ENCODE measurements at regions of chr22 and their contacts with region 1.

Region 1: GRCh38 chr22:17164392-17165024 is 5.4 kb upstream of the HDHD5 start:
- DNase-seq: no peak
- H3K4me3 ChIP-seq: no peak overlapping the region
- H3K27ac ChIP-seq: no peak overlapping the region
- H3K4me1 ChIP-seq: peaks cover 26% of the 10 kb centered on the region
- H3K27me3 ChIP-seq: no peaks in the 10 kb centered on the region
- CTCF ChIP-seq: no peak

Region 2: GRCh38 chr22:17084554-17085276 is 79.8 kb before region 1 on chr22 and contains the start of gene IL17RA:
- intact Hi-C with region 1: loop called (anchors 10 kb)
- DNase-seq: peak; percentile 90
- H3K4me3 ChIP-seq: peak within 1 kb of the TSS; percentile 86
- H3K27ac ChIP-seq: peak within 1 kb of the TSS; percentile 87
- H3K4me1 ChIP-seq: peaks cover 35% of the 10 kb centered on the region
- H3K27me3 ChIP-seq: no peaks in the 10 kb centered on the region
- CTCF ChIP-seq: peak; percentile 6
- total RNA-seq, gene IL17RA: 7.6 TPM

Region 3: DNA sequence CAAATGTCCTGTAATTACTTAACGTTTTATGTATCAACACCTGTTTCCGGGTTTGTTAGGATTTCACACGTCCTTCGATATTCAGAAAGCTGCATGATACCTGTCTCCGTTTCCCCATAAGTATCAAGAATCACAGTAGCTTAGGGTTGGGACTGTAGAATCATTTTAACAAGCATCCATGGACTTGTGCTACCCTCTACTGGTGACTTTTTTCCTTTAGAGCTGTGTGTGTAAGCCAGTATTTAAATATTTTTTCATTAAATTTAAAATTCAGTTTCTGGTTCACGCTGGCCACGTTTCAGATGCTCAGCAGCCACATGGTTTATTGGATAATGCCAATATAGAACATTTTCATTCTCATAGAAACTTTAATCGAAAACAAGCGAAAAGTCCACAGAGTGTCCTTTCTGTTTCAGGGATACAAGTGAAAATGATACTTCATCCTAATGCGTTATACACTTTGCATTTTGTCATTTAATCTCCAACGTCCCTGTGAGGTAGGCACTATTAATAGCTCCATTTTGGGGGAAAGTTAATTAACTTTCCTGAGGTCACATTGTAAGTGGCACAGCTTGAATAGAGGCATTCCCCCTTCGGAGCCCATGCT is 337.3 kb after region 1 on chr22:
- intact Hi-C with region 1: loop called (anchors 10 kb)
- DNase-seq: no peak
- H3K4me3 ChIP-seq: no peak overlapping the region
- H3K27ac ChIP-seq: no peak overlapping the region
- H3K4me1 ChIP-seq: no peaks in the 10 kb centered on the region
- H3K27me3 ChIP-seq: no peaks in the 10 kb centered on the region
- CTCF ChIP-seq: peak; percentile 72